ENCODE measurements at regions of chr5 and their contacts with region 1.

Region 1: GRCh38 chr5:40879163-40879942 is 29.9 kb upstream of the C7 start:
- DNase-seq: peak; percentile 66
- ATAC-seq: peak; percentile 60; the same call in 1 of the 2 replicates
- H3K4me3 ChIP-seq: no peak overlapping the region
- H3K27ac ChIP-seq: no peak overlapping the region
- H3K4me1 ChIP-seq: no peaks in the 10 kb centered on the region
- H3K27me3 ChIP-seq: no peaks in the 10 kb centered on the region
- CTCF ChIP-seq: peak; percentile 87

Region 2: GRCh38 chr5:40652441-40653220 is 226.7 kb before region 1 on chr5:
- CTCF ChIA-PET with region 1: no interaction called
- POLR2A ChIA-PET with region 1: no interaction called
- intact Hi-C with region 1: no loop called
- DNase-seq: no peak
- ATAC-seq: no peak
- H3K4me3 ChIP-seq: no peak overlapping the region
- H3K27ac ChIP-seq: no peak overlapping the region
- H3K4me1 ChIP-seq: no peaks in the 10 kb centered on the region; the same call in 1 of the 2 replicates
- H3K27me3 ChIP-seq: no peaks in the 10 kb centered on the region
- CTCF ChIP-seq: no peak

Region 3: GRCh38 chr5:40842351-40842750 is 37.0 kb before region 1 on chr5:
- CTCF ChIA-PET with region 1: no interaction called
- POLR2A ChIA-PET with region 1: no interaction called
- intact Hi-C with region 1: loop called (anchors 2 kb)
- DNase-seq: peak; percentile 86
- ATAC-seq: peak; percentile 98
- H3K4me3 ChIP-seq: peak overlapping the region; percentile 58
- H3K27ac ChIP-seq: peak overlapping the region; percentile 39
- H3K4me1 ChIP-seq: peaks cover 26% of the 10 kb centered on the region
- H3K27me3 ChIP-seq: no peaks in the 10 kb centered on the region
- CTCF ChIP-seq: no peak